ENCODE measurements at regions of chr3 and their contacts with region 1.

Region 1: DNA sequence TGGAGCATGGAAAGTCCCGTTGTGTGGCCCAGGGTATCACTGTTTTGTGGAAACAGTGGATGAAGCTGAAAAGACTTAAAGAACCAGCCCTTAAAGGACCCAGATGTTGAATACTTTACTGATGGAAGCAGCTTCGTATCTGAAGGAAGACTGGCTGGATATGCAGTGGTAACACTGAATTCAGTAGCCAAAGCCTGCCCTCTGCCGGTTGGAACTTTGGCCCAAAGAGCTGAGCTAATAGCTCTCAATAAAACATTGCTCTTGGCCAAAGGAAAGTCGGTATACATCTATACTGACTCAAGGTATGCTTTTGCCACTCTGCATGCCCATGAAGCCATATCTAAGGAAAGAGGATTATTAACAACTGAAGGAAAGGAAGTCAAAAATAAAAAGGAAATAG is 885.4 kb downstream of the PDCD6IP start:
- DNase-seq: peak; percentile 66
- H3K4me3 Mint-ChIP-seq: no peak overlapping the region
- H3K27ac Mint-ChIP-seq: no peak overlapping the region
- H3K4me1 Mint-ChIP-seq: peaks cover 11% of the 10 kb centered on the region
- H3K27me3 Mint-ChIP-seq: no peaks in the 10 kb centered on the region
- CTCF ChIP-seq: no peak

Region 2: DNA sequence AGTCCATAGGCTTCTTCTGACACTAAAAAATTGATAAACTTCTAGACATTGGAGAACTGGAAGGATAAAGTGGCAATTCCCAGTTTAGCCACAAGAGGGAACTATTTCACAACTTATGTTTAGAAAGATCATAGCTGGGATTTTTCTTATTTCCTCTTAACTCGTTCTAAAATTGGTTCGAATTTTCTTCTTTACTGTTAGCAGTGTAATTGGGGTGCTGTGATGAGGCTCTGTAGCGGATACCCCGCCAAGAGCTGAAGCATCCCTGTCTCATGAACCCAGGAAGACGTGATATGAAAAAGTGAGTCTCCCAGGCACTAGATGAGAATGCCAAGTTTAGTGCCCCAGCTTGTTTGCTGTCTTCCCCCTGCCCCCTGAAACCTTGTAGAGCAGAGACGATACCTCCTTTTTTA is 800.3 kb before region 1 on chr3:
- CTCF ChIA-PET with region 1: interaction called, 19 read pairs
- intact Hi-C with region 1: loop called (anchors 1 kb)
- DNase-seq: peak; percentile 41
- H3K4me3 Mint-ChIP-seq: no peak overlapping the region
- H3K27ac Mint-ChIP-seq: no peak overlapping the region
- H3K4me1 Mint-ChIP-seq: no peaks in the 10 kb centered on the region
- H3K27me3 Mint-ChIP-seq: peaks cover 33% of the 10 kb centered on the region
- CTCF ChIP-seq: peak; percentile 46

Region 3: GRCh38 chr3:33980252-33980651 is 703.6 kb before region 1 on chr3:
- CTCF ChIA-PET with region 1: interaction called, 18 read pairs
- intact Hi-C with region 1: loop called (anchors 1 kb)
- DNase-seq: peak; percentile 30
- H3K4me3 Mint-ChIP-seq: no peak overlapping the region
- H3K27ac Mint-ChIP-seq: no peak overlapping the region
- H3K4me1 Mint-ChIP-seq: no peaks in the 10 kb centered on the region
- H3K27me3 Mint-ChIP-seq: peaks cover 6% of the 10 kb centered on the region
- CTCF ChIP-seq: peak; percentile 19

Region 4: GRCh38 chr3:34106879-34107278 is 577.0 kb before region 1 on chr3:
- CTCF ChIA-PET with region 1: no interaction called
- intact Hi-C with region 1: loop called (anchors 5 kb)
- DNase-seq: peak; percentile 55
- H3K4me3 Mint-ChIP-seq: no peak overlapping the region
- H3K27ac Mint-ChIP-seq: no peak overlapping the region
- H3K4me1 Mint-ChIP-seq: no peaks in the 10 kb centered on the region
- H3K27me3 Mint-ChIP-seq: peaks cover 38% of the 10 kb centered on the region
- CTCF ChIP-seq: no peak

Region 5: GRCh38 chr3:34260271-34261006 is 423.4 kb before region 1 on chr3:
- CTCF ChIA-PET with region 1: interaction called, 29 read pairs
- intact Hi-C with region 1: loop called (anchors 2 kb)
- DNase-seq: peak; percentile 76
- H3K4me3 Mint-ChIP-seq: no peak overlapping the region
- H3K27ac Mint-ChIP-seq: no peak overlapping the region
- H3K4me1 Mint-ChIP-seq: peaks cover 17% of the 10 kb centered on the region
- H3K27me3 Mint-ChIP-seq: peaks cover 15% of the 10 kb centered on the region
- CTCF ChIP-seq: peak; percentile 37

Region 6: GRCh38 chr3:34387826-34388564 is 295.9 kb before region 1 on chr3:
- CTCF ChIA-PET with region 1: no interaction called
- intact Hi-C with region 1: loop called (anchors 10 kb)
- DNase-seq: no peak
- H3K4me3 Mint-ChIP-seq: no peak overlapping the region
- H3K27ac Mint-ChIP-seq: no peak overlapping the region
- H3K4me1 Mint-ChIP-seq: peaks cover 8% of the 10 kb centered on the region
- H3K27me3 Mint-ChIP-seq: no peaks in the 10 kb centered on the region
- CTCF ChIP-seq: no peak

Region 7: GRCh38 chr3:34619990-34620389 is 63.9 kb before region 1 on chr3:
- CTCF ChIA-PET with region 1: interaction called, 14 read pairs
- intact Hi-C with region 1: loop called (anchors 1 kb)
- DNase-seq: peak; percentile 4
- H3K4me3 Mint-ChIP-seq: no peak overlapping the region
- H3K27ac Mint-ChIP-seq: no peak overlapping the region
- H3K4me1 Mint-ChIP-seq: no peaks in the 10 kb centered on the region
- H3K27me3 Mint-ChIP-seq: no peaks in the 10 kb centered on the region
- CTCF ChIP-seq: no peak

Region 8: GRCh38 chr3:34842706-34843480 is 159.0 kb after region 1 on chr3:
- CTCF ChIA-PET with region 1: no interaction called
- intact Hi-C with region 1: no loop called
- DNase-seq: no peak
- H3K4me3 Mint-ChIP-seq: no peak overlapping the region
- H3K27ac Mint-ChIP-seq: no peak overlapping the region
- H3K4me1 Mint-ChIP-seq: peaks cover 23% of the 10 kb centered on the region
- H3K27me3 Mint-ChIP-seq: peaks cover 54% of the 10 kb centered on the region
- CTCF ChIP-seq: no peak

Measured in Calu3 (cell line).